ENCODE measurements at regions of chr2 and their contacts with region 1.

Region 1: DNA sequence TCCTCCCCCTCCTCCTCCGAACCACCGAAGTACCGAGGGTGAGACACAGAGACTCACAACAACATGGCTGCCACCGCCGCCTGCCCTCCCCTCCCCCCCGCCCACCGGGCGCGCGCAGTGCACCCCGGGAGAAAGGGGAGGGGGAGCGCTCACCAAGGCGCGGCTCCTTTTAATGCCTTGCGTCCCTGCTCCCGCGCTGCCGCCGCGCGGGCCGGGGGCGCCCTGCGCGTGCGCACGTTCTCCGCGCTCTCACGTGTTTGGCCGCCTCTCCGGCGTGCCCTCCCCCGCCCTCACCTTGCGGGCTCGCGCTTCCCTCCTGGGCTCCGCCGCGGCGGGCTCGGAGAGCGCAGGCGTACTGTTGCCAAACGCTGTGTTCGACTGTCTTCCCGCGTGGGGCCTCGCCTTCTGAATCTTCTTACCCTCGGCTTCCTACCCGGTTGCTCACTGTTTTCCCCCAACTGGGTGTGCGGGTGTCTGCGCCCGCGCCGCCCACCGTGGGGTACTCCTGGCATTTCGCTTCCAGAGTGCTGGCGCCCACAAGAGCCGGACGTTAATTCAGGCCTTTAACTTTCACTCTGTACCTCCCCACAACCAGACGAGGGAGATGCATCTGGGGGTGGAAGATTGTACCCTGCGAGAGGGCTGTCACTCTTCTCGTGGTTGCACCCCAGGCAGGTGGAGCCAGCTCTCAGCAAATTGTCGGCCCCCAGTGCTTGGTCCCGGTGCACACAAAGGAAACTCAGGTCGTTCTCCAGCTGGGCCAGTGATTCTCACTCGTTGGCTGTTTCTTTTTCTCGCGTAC is at the start of gene PUM2:
- DNase-seq: peak; percentile 97
- H3K4me3 Mint-ChIP-seq: peak within 1 kb of the TSS; percentile 93
- H3K27ac Mint-ChIP-seq: peak within 1 kb of the TSS; percentile 92
- H3K4me1 Mint-ChIP-seq: peaks cover 34% of the 10 kb centered on the region
- H3K27me3 Mint-ChIP-seq: no peaks in the 10 kb centered on the region
- total RNA-seq, gene PUM2: 121 and 127 TPM in 2 replicates

Region 2: DNA sequence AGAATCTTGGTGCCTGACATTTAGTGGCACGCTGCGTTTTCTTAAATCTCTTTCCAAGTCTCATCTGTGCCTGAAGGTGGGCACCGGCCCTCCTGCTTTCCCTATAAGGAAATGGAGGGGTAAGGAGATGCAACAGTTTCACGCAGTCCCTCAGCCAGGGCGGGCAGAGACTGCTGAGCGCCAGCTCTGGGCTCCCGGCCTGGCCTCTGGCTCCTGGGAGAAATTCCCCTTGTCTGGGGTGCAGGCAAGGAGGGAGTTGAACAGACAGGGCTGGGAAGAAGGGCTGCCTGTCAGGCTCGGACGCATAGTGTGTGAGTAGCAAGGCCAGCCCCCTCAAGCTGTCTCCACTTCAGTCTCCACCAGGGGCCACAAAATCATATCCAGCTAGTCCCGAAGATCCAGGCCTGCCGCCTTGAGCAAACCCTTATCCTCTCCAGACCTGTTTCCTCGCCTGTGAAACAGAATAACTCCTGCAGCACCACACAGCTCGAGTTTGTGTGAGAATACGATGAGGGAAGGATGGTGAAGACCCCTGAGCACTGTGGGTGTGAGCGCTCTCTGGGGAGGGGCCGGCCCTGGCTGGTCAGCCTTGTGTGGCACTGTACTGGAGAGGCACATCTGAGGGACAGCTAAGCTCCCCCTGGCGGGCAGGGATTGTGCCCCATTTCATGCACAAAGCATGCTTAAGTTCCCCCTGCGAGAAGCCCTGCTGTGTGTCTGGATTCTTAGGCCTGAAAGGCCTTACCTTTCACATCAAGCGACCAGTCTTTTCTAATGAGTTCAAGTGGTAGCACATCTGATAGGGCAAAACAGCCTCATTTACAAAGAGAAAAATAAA is 159.9 kb before region 1 on chr2:
- intact Hi-C with region 1: no loop called
- DNase-seq: no peak
- H3K4me3 Mint-ChIP-seq: no peak overlapping the region
- H3K27ac Mint-ChIP-seq: no peak overlapping the region
- H3K4me1 Mint-ChIP-seq: no peaks in the 10 kb centered on the region
- H3K27me3 Mint-ChIP-seq: no peaks in the 10 kb centered on the region

Region 3: GRCh38 chr2:20309001-20309400 is 42.0 kb before region 1 on chr2:
- intact Hi-C with region 1: loop called (anchors 5 kb)
- DNase-seq: no peak
- H3K4me3 Mint-ChIP-seq: no peak overlapping the region
- H3K27ac Mint-ChIP-seq: no peak overlapping the region
- H3K4me1 Mint-ChIP-seq: peaks cover 10% of the 10 kb centered on the region
- H3K27me3 Mint-ChIP-seq: no peaks in the 10 kb centered on the region

Region 4: DNA sequence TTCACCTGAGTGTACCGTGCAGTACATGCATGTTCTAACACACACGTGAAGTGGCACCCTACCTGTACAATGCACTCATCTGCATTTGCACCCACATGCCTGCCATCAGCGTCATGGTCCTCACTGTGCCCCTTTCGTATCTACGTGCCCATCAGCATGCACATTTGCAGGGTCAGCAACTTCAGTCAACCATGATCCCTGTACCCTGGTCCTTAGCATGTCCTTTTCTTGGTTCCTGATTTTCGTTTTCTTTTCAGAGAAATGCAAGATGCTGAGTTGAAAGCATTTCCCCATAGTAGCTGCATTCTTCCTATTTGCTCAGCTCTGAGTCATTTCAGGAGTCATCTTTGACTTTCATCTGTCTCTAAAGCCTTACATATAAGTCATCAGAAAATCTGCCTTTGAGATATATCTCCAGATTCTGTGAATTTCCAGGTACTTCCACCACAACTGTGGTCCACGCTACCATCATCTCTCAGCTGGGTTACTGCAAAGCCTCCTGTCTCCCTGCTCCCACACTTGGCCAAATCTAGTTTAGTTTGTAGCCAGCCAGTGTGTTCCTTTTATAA is 14.4 kb after region 1 on chr2:
- intact Hi-C with region 1: loop called (anchors 1 kb)
- DNase-seq: peak; percentile 52
- H3K4me3 Mint-ChIP-seq: peak overlapping the region; percentile 9
- H3K27ac Mint-ChIP-seq: peak overlapping the region; percentile 51
- H3K4me1 Mint-ChIP-seq: peaks cover 25% of the 10 kb centered on the region
- H3K27me3 Mint-ChIP-seq: peaks cover 4% of the 10 kb centered on the region

Region 5: GRCh38 chr2:20650880-20651730 is 300.2 kb after region 1 on chr2 and contains the start of gene HS1BP3:
- intact Hi-C with region 1: loop called (anchors 2 kb)
- DNase-seq: peak; percentile 88
- H3K4me3 Mint-ChIP-seq: peak within 1 kb of the TSS; percentile 87
- H3K27ac Mint-ChIP-seq: peak within 1 kb of the TSS; percentile 85
- H3K4me1 Mint-ChIP-seq: peaks cover 15% of the 10 kb centered on the region
- H3K27me3 Mint-ChIP-seq: peaks cover 10% of the 10 kb centered on the region
- total RNA-seq, gene HS1BP3: 11.5 and 11.9 TPM in 2 replicates

Measured in activated T-helper 2 cell treated with anti-CD3 and anti-CD28 coated beads, Interferon-gamma antibody, Interleukin-2, Interleukin-4, amounts not matched to agents 10 μg/mL and 5 μg/mL and 100 μg/mL, durations not matched to agents 14 hours and 24 hours and 36 hours (primary cell).